ENCODE measurements at regions of chr3 and their contacts with region 1.

Region 1: GRCh38 chr3:50542177-50543034 is 25.1 kb downstream of the C3orf18 start:
- DNase-seq: peak; percentile 44
- H3K4me3 ChIP-seq: no peak overlapping the region
- H3K27ac ChIP-seq: no peak overlapping the region
- H3K4me1 ChIP-seq: peaks cover 9% of the 10 kb centered on the region
- H3K27me3 ChIP-seq: no peaks in the 10 kb centered on the region
- CTCF ChIP-seq: peak; percentile 93

Region 2: DNA sequence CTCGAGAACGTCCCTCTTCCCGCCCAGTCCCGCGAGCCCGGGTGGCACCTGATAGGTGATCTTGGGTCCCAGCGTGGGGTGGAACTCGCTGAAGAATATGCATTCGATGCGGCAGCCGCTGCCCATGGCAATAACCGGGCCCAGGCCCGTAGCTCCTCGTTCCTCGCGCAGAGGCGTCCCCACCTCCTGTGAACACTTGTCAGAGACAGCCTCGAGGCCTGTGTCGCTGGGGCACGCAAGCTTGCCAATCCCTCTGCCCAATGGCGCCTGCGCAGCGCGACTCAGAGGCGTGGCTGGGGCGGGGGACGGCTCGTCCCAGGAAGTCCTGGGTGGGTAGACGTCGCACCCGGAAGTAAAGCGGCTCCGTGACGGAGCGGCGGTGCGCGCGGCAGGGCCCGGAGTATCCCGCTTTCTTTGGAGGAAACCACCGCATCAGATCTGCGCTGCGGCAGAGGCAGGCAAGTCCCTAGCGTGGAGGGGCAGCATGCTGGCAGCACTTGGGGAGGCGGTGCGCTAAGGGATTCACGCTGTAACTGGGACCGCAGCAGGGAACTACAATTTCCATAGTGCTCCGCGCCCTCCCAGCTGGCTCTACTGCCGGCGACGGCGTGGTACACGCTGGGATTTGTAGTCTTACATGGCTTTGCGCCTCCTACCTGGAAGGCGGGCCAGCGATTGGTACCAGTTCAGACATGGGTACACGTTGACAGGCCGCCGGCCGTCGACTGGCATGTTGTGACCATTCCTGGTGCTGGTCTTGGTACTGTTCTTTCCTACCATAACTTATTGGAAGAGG is 191.7 kb before region 1 on chr3 and contains the starts of genes CYB561D2 and NPRL2:
- CTCF ChIA-PET with region 1: interaction called, 10 read pairs
- dilution Hi-C with region 1: no loop called
- in situ Hi-C with region 1: loop called in 1 of 2 experiments (anchors 5 kb)
- intact Hi-C with region 1: loop called (anchors 1 kb)
- DNase-seq: peak; percentile 94
- H3K4me3 ChIP-seq: peak within 1 kb of the TSS; percentile 58 to 88 (median 72)
- H3K27ac ChIP-seq: peak within 1 kb of the TSS; percentile 19
- H3K4me1 ChIP-seq: peaks cover 21% of the 10 kb centered on the region
- H3K27me3 ChIP-seq: no peaks in the 10 kb centered on the region
- CTCF ChIP-seq: no peak
- total RNA-seq, gene CYB561D2: 10.0 to 11.9 TPM
- total RNA-seq, gene NPRL2: 15.6 to 17.7 TPM

Region 3: GRCh38 chr3:50365080-50365841 is 177.1 kb before region 1 on chr3:
- CTCF ChIA-PET with region 1: interaction called, 11 read pairs
- dilution Hi-C with region 1: no loop called
- in situ Hi-C with region 1: no loop called
- intact Hi-C with region 1: no loop called
- DNase-seq: peak; percentile 85
- H3K4me3 ChIP-seq: peak overlapping the region; percentile 40 to 76 (median 62)
- H3K27ac ChIP-seq: no peak overlapping the region
- H3K4me1 ChIP-seq: peaks cover 14% of the 10 kb centered on the region
- H3K27me3 ChIP-seq: no peaks in the 10 kb centered on the region
- CTCF ChIP-seq: peak in 1 of 2 donors; percentile 25

Region 4: GRCh38 chr3:50436114-50436674 is 106.2 kb before region 1 on chr3:
- CTCF ChIA-PET with region 1: no interaction called
- dilution Hi-C with region 1: no loop called
- in situ Hi-C with region 1: loop called (anchors 10 kb)
- intact Hi-C with region 1: loop called (anchors 1 kb)
- DNase-seq: peak; percentile 33
- H3K4me3 ChIP-seq: no peak overlapping the region
- H3K27ac ChIP-seq: no peak overlapping the region
- H3K4me1 ChIP-seq: no peaks in the 10 kb centered on the region
- H3K27me3 ChIP-seq: no peaks in the 10 kb centered on the region
- CTCF ChIP-seq: peak; percentile 80 to 91

Region 5: DNA sequence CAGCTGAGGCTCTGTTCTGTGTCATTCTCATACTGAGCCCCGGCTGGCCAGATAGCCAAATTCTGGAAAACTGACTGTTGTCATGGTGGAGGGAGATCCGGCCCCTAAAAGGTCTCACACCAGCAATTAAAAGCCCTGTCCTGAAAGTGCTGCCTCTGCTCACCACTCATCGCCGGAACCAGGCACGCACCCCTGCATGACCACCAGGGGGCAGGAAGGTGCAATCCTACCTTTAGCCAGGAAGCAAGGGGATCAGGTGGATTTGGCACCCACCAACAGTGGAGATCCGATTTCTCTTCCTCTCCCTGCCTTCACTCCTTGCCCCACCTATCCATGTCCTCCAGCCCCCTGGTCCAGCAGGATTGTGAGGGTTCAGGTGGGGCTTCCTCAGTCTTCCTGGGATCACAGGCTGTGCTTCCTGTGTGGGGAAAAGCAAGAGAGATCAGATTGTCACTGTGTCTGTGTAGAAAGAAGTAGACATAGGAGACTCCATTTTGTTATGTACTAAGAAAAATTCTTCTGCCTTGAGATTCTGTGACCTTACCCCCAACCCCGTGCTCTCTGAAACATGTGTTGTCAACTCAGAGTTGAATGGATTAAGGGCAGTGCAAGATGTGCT is 22.8 kb before region 1 on chr3:
- CTCF ChIA-PET with region 1: no interaction called
- dilution Hi-C with region 1: no loop called
- in situ Hi-C with region 1: no loop called
- intact Hi-C with region 1: loop called (anchors 1 kb)
- DNase-seq: peak; percentile 38
- H3K4me3 ChIP-seq: no peak overlapping the region
- H3K27ac ChIP-seq: no peak overlapping the region
- H3K4me1 ChIP-seq: no peaks in the 10 kb centered on the region
- H3K27me3 ChIP-seq: no peaks in the 10 kb centered on the region
- CTCF ChIP-seq: peak; percentile 98

Region 6: GRCh38 chr3:50559702-50560101 is 17.3 kb after region 1 on chr3:
- CTCF ChIA-PET with region 1: no interaction called
- dilution Hi-C with region 1: no loop called
- in situ Hi-C with region 1: no loop called
- intact Hi-C with region 1: no loop called
- DNase-seq: no peak
- H3K4me3 ChIP-seq: no peak overlapping the region
- H3K27ac ChIP-seq: no peak overlapping the region
- H3K4me1 ChIP-seq: peaks cover 15% of the 10 kb centered on the region
- H3K27me3 ChIP-seq: no peaks in the 10 kb centered on the region
- CTCF ChIP-seq: no peak

Measured in mammary epithelial cell (primary cell).